ENCODE measurements at regions of chr1 and their contacts with region 1.

Region 1: GRCh38 chr1:45303582-45304310 is 22.9 kb upstream of the HPDL start:
- DNase-seq: peak; percentile 100
- H3K4me3 Mint-ChIP-seq: peak overlapping the region; percentile 91
- H3K27ac Mint-ChIP-seq: peak overlapping the region; percentile 94
- H3K4me1 Mint-ChIP-seq: peaks cover 33% of the 10 kb centered on the region
- H3K27me3 Mint-ChIP-seq: no peaks in the 10 kb centered on the region

Region 2: DNA sequence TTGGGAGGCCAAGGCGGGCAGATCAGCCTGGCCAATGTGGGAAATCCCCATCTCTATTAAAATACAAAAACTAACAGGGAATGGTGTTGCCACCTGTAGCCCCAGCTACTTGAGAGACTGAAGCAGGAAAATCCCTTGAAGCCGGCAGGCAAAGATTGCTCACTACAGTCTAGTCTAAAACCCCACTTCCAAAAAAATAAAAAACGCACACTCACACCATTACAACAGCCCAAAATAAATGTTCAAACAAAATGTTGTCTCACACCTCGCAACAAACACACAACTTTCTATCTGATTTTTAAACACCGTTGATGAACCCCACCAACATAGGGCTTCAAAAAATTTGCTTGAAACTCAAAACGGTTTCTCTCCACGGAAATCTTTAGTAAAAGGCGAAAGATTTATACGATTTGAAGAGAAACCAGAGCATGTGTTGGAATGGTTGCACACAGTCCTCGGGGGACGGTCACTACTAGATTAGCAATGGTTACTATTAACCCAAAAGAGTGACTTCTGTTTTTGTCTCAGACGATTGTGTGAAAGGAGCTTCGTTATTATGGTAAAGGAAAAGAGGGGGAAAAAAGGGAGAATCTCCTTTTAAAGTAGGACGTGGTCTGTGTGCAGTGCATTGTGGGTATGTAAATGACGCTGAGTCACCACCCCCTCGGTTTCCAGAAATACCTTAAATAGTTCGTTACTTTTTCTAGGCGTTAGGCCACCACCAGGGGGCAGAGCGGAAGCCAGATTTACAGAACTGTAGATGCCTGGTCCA is 572.8 kb before region 1 on chr1 and contains the start of gene RNU5D-1:
- CTCF ChIA-PET with region 1: interaction called, 3 read pairs
- intact Hi-C with region 1: loop called (anchors 2 kb)
- DNase-seq: peak; percentile 99
- H3K4me3 Mint-ChIP-seq: peak within 1 kb of the TSS; percentile 57
- H3K27ac Mint-ChIP-seq: peak within 1 kb of the TSS; percentile 99
- H3K4me1 Mint-ChIP-seq: peaks cover 46% of the 10 kb centered on the region
- H3K27me3 Mint-ChIP-seq: peaks cover 3% of the 10 kb centered on the region
- total RNA-seq, gene RNU5D-1: not detected

Region 3: GRCh38 chr1:44985747-44986359 is 317.9 kb before region 1 on chr1:
- CTCF ChIA-PET with region 1: interaction called, 3 read pairs
- intact Hi-C with region 1: loop called (anchors 1 kb)
- DNase-seq: no peak
- H3K4me3 Mint-ChIP-seq: peak overlapping the region; percentile 100
- H3K27ac Mint-ChIP-seq: peak overlapping the region; percentile 80
- H3K4me1 Mint-ChIP-seq: peaks cover 23% of the 10 kb centered on the region
- H3K27me3 Mint-ChIP-seq: no peaks in the 10 kb centered on the region

Region 4: DNA sequence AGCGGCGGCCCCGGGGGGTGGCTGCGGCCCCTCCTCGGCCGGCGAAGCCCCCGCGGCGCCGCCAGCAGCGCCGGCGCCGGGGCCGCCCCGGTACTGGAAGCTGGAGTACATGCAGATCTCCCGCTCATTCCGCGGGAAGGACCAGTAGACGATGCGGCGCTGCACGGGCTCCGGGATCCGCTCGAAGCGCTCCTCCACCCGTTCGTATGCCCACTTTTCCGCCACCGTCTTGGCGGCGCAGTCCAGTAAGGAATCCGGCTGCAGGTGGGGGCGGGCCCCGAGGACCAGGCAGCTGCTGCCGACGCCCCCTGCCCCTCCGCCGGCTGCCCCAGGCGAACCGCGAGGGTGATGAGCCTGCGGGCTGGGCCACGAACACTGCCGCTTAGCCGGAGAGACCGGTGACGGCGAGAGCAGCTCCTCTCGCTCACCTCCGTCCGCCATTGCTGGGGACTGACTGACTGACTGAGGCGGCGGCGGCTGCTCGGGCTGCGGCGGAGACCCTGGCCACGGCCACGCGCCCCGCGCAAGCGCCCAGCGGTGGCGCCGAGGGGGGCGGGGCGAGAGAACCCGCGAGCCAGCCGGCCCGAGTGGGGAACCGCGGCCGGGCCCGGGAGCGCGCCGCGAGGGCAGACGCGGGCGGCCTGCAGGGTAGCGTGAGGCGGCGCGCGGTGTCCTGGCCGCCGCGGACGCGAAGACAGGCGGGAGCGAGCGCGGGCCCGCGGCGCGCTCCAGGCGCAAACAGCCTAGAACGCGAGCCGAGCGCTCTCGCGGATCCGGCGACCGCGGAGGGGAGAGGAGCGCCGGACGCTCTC is 97.6 kb before region 1 on chr1 and contains the start of gene ZSWIM5:
- CTCF ChIA-PET with region 1: interaction called, 4 read pairs
- intact Hi-C with region 1: loop called (anchors 1 kb)
- DNase-seq: peak; percentile 59
- H3K4me3 Mint-ChIP-seq: peak within 1 kb of the TSS; percentile 90
- H3K27ac Mint-ChIP-seq: peak within 1 kb of the TSS; percentile 72
- H3K4me1 Mint-ChIP-seq: peaks cover 33% of the 10 kb centered on the region
- H3K27me3 Mint-ChIP-seq: peaks cover 4% of the 10 kb centered on the region
- total RNA-seq, gene ZSWIM5: 0.15 to 0.26 TPM

Region 5: GRCh38 chr1:45339789-45340570 is 36.2 kb after region 1 on chr1 and contains the starts of genes MUTYH and TOE1:
- CTCF ChIA-PET with region 1: interaction called, 19 read pairs
- intact Hi-C with region 1: loop called (anchors 1 kb)
- DNase-seq: peak; percentile 95
- H3K4me3 Mint-ChIP-seq: peak within 1 kb of the TSS; percentile 100
- H3K27ac Mint-ChIP-seq: peak within 1 kb of the TSS; percentile 100
- H3K4me1 Mint-ChIP-seq: peaks cover 35% of the 10 kb centered on the region
- H3K27me3 Mint-ChIP-seq: no peaks in the 10 kb centered on the region
- total RNA-seq, gene MUTYH: 42.0 to 45.0 TPM
- total RNA-seq, gene TOE1: 23.0 to 23.8 TPM